ENCODE measurements at regions of chr1 and their contacts with region 1.

Region 1: DNA sequence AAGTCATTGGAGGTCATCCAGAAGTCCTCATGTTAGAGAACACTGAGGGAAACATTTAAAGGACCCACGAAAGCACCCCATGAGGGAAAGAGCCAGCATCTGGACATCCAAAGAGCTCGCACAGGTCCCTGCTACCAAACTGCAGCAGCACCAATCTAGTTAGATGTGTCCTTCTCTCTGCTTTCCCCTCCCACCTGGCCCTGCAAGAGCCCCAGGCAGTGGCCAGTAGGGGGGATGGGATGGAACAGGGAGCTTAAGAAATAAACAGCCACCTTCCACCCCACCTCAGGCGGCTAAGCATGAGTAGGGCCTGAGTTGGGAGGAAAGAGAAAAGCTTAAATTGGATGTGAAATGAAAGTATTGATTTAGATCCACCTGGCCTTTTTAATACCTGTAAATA is 175.9 kb upstream of the KCND3 start:
- DNase-seq: no peak
- H3K4me3 ChIP-seq: no peak overlapping the region
- H3K4me3 Mint-ChIP-seq: no peak overlapping the region
- H3K27ac ChIP-seq: no peak overlapping the region
- H3K27ac Mint-ChIP-seq: no peak overlapping the region
- H3K4me1 ChIP-seq: no peaks in the 10 kb centered on the region
- H3K4me1 Mint-ChIP-seq: no peaks in the 10 kb centered on the region
- H3K27me3 ChIP-seq: no peaks in the 10 kb centered on the region
- H3K27me3 Mint-ChIP-seq: peaks cover 14 to 17% of the 10 kb centered on the region in 2 donors

Region 2: DNA sequence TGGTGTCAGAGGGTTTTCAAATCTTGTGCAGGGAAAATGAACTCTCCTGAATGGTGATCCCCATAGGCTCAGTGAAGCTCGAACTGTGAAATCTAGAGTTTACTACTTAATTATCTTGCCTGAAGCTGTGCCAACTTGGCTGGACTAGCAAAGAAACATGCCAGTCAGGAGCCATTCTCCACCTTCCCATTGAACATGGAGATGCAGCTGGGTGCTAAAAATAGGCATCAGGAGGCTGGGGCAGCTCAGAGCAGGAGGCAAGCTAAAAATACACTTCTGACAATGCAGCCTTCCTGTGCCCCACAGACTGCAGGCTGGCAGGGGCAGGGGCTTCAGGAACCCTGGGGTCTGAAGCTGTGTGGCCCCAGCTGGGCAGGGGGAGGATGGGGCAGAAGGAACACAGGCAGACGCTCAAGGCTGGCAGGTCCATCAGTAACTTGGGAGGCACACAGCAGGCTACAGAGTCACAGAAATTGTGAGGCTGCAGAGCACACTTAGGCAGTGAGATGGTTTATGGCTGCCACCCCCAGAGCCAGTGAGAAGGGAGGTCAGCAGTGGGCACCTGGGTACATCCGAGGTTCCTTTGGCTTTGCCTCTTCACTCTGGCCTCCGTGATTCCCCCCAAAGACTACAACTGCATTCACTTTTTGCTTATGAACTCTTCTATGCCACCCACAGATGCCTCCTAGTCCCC is 20.5 kb before region 1 on chr1:
- CTCF ChIA-PET with region 1: no interaction called
- POLR2A ChIA-PET with region 1: no interaction called
- intact Hi-C with region 1: loop called (anchors 1 kb)
- DNase-seq: no peak
- H3K4me3 ChIP-seq: no peak overlapping the region
- H3K4me3 Mint-ChIP-seq: no peak overlapping the region
- H3K27ac ChIP-seq: no peak overlapping the region
- H3K27ac Mint-ChIP-seq: no peak overlapping the region
- H3K4me1 ChIP-seq: no peaks in the 10 kb centered on the region
- H3K4me1 Mint-ChIP-seq: no peaks in the 10 kb centered on the region
- H3K27me3 ChIP-seq: peaks cover 7% of the 10 kb centered on the region
- H3K27me3 Mint-ChIP-seq: peaks cover 13 to 20% of the 10 kb centered on the region in 2 donors